CD4-positive, alpha-beta memory T cell (primary cell): ENCODE measurements at regions of chr17 and their contacts with region 1.

Region 1: GRCh38 chr17:4881761-4882555 is 17.4 kb upstream of the C17orf107 start:
- DNase-seq: peak in 4 of 5 donors; percentile 64 to 69 (median 65)
- H3K4me3 ChIP-seq: no peak overlapping the region
- H3K4me3 Mint-ChIP-seq: no peak overlapping the region
- H3K27ac ChIP-seq: no peak overlapping the region
- H3K27ac Mint-ChIP-seq: peak overlapping the region in 2 of 7 donors; percentile 29 to 37
- H3K4me1 ChIP-seq: no peaks in the 10 kb centered on the region
- H3K4me1 Mint-ChIP-seq: peaks cover 0 to 3% (median 0%) of the 10 kb centered on the region in 4 donors
- H3K27me3 ChIP-seq: no peaks in the 10 kb centered on the region
- H3K27me3 Mint-ChIP-seq: no peaks in the 10 kb centered on the region

Region 2: GRCh38 chr17:4739122-4740024 is 142.6 kb before region 1 on chr17 and contains the starts of genes CXCL16 and ZMYND15:
- CTCF ChIA-PET with region 1: interaction called, 3 read pairs
- POLR2A ChIA-PET with region 1: no interaction called
- intact Hi-C with region 1: loop called (anchors 1 kb)
- DNase-seq: peak; percentile 63 to 81 (median 67)
- H3K4me3 ChIP-seq: peak within 1 kb of the TSS; percentile 23 to 67
- H3K4me3 Mint-ChIP-seq: peak within 1 kb of the TSS; percentile 90 to 95 (median 92)
- H3K27ac ChIP-seq: peak within 1 kb of the TSS; percentile 25
- H3K27ac Mint-ChIP-seq: peak within 1 kb of the TSS; percentile 77 to 97 (median 93)
- H3K4me1 ChIP-seq: peaks cover 19% of the 10 kb centered on the region
- H3K4me1 Mint-ChIP-seq: peaks cover 10 to 22% (median 14%) of the 10 kb centered on the region in 4 donors
- H3K27me3 ChIP-seq: no peaks in the 10 kb centered on the region
- H3K27me3 Mint-ChIP-seq: peaks cover 1 to 6% of the 10 kb centered on the region in 2 donors
- total RNA-seq, gene CXCL16: 3.2 to 3.4 TPM
- total RNA-seq, gene ZMYND15: 0.41 to 0.44 TPM

Region 3: DNA sequence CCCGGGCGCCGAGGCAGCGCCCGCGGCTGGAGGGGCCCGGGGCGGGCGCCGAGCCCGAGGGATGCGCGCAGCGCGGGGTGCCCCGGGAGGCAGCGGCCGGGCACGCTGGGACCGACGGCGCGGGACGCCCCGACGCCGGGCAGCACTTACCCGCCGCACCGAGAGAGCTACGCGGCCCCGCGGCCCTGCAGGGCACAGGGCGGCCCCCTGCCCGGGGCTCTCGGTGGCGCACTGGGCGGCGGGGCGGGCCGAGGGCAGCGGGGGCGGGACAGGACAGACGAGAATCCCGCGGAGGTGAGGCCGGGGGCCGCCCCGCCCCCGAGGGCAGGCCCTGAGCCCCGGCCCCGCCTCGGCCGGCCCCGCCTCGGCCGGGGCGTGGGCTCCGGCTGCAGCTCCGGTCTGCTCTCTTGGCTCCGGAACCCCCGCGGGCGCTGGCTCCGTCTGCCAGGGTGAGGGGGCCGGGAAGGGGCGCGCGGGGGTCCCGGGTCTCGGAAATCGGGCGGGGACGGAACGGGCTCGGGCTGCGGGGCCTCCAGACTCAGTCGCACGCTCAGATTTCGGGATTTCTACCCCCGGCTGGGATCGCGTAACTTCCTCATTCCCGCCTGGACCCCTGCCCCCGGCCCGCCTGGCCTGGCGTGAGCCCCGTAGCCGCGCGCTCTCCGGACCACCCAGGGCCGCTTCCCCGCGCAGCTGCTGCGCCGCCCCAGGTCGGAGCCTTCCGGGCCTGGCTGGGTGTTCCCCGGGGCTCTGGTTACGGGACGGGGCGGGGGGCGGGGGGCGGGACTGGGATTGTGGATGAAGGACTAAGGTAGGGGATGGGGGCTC is 75.0 kb before region 1 on chr17 and contains the start of gene PLD2:
- CTCF ChIA-PET with region 1: no interaction called
- POLR2A ChIA-PET with region 1: no interaction called
- intact Hi-C with region 1: loop called (anchors 5 kb)
- DNase-seq: peak; percentile 84 to 87 (median 85)
- H3K4me3 ChIP-seq: peak within 1 kb of the TSS; percentile 47 to 54
- H3K4me3 Mint-ChIP-seq: peak within 1 kb of the TSS; percentile 69 to 85 (median 82)
- H3K27ac ChIP-seq: peak within 1 kb of the TSS; percentile 67
- H3K27ac Mint-ChIP-seq: peak within 1 kb of the TSS; percentile 23 to 83 (median 60)
- H3K4me1 ChIP-seq: peaks cover 15% of the 10 kb centered on the region
- H3K4me1 Mint-ChIP-seq: peaks cover 3 to 23% (median 10%) of the 10 kb centered on the region in 4 donors
- H3K27me3 ChIP-seq: no peaks in the 10 kb centered on the region
- H3K27me3 Mint-ChIP-seq: no peaks in the 10 kb centered on the region
- total RNA-seq, gene PLD2: 30.8 to 37.5 TPM